ENCODE measurements at regions of chr16 and their contacts with region 1.

Region 1: DNA sequence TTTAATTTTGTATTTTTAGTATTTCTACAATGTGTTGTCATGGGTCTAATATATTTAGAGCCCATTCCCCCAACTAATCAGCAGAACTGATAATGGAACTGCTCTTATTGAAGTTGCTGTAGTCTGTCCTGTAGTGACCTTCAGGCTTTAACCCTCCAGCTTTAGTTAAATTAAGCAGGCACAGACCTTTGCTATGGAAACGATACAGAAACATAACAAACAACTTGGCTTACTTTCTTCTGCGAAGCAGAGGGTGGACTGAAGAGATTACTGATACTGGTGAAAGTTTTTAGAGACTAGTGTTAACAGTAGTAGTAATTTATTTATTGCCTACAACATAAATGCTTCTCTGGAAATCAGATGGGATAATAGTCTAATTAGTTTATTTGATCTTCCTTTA is 61.4 kb downstream of the NFATC3 start:
- DNase-seq: no peak
- H3K4me3 ChIP-seq: no peak overlapping the region
- H3K27ac ChIP-seq: 0 out of 2 replicates have a peak overlapping the region, but pooled peaks have one; percentile 37
- H3K4me1 ChIP-seq: peaks cover 31% of the 10 kb centered on the region
- H3K27me3 ChIP-seq: no peaks in the 10 kb centered on the region
- CTCF ChIP-seq: no peak

Region 2: DNA sequence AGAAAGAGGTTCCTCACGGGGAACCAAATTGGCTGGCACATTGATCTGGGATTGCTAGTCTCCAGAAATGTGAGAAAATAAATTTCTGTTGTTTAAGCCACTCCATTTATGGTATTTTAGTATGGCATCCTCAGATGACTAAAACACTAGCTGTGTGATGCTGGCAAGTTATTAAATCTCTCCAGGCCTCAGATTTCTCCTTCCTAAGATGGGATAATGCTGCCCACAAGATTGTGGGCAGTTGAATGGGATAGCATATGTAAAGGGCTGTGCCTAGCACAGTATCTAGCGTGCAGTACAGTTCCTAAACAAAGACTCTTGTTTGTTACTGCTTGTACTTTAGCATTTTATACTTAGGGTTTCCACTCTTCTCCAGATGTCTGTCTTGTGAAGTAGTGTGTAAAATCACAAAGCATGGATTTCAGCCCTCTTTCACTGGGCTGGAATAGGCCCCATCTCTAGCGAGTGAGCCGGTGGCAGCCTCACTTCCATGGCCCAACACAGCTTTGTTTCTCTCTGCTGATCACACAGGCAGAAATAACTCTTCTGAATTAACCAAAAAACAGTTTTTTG is 1075.0 kb before region 1 on chr16:
- CTCF ChIA-PET with region 1: no interaction called
- POLR2A ChIA-PET with region 1: interaction called, 13 read pairs
- intact Hi-C with region 1: no loop called
- DNase-seq: no peak
- H3K4me3 ChIP-seq: no peak overlapping the region
- H3K27ac ChIP-seq: no peak overlapping the region
- H3K4me1 ChIP-seq: 0 out of 2 replicates have a peak, but pooled peaks cover 4% of the 10 kb centered on the region
- H3K27me3 ChIP-seq: no peaks in the 10 kb centered on the region
- CTCF ChIP-seq: no peak

Region 3: DNA sequence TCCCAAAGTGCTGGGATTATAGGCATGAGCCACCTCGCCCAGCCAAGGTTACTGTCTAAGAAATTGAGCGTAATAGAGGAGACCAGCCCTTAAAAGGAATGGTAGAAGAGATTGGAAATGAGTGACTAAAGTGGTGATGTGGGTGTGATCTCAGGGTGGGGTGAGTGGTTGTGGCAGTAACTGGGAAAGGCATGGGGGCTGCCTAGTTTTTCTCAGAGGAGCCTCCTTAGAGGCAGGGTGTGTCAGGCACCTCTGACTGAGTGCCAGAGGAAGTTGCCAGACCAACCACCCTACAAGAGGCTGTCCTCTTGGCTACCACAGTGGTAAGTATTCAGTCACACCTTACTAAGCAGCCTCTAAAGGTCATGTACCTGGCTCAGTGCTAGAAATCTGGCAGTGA is 114.6 kb before region 1 on chr16:
- CTCF ChIA-PET with region 1: no interaction called
- POLR2A ChIA-PET with region 1: no interaction called
- intact Hi-C with region 1: no loop called
- DNase-seq: peak; percentile 76 to 80
- H3K4me3 ChIP-seq: no peak overlapping the region
- H3K27ac ChIP-seq: peak overlapping the region; percentile 59
- H3K4me1 ChIP-seq: peaks cover 15% of the 10 kb centered on the region
- H3K27me3 ChIP-seq: no peaks in the 10 kb centered on the region
- CTCF ChIP-seq: no peak

Region 4: DNA sequence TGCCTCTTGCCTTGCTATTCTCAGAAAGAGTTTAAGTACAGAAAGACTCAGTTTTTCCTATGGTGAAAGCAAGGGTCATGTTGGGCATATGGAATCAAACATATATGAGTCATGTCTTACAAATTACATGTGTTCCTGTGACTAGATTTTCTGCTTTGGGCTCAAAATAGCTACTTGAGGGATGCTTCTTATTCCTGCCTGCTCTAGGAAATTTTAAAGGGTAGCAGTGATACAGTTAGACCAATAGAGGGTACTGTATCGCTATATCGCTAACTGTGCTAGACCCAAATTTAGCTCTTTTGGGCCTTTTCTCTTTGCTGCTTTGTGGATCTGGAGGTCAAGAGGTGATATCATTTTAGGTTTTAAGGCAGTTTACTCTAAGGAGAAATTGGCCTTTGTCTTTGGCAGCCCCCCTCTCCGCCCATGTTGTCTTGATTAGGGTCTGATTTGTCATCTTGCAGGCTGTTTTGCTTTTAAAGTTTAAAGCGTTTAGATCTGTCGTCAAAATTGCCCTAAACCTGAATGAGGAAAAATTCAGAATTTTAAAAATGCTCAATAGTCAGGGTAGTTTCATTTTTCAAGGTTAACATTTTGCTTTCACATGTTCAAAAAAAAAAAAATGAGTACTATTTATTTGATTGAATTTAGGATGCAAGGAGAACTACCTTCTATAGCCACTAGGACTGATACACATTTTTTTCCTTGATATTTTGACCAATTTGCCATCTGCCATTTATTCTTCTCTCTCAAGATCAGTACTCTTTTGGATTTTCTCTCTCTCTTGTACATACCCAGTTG is 52.6 kb before region 1 on chr16:
- CTCF ChIA-PET with region 1: no interaction called
- POLR2A ChIA-PET with region 1: no interaction called
- intact Hi-C with region 1: loop called (anchors 10 kb)
- DNase-seq: no peak
- H3K4me3 ChIP-seq: no peak overlapping the region
- H3K27ac ChIP-seq: no peak overlapping the region
- H3K4me1 ChIP-seq: peaks cover 12% of the 10 kb centered on the region; the same call in 1 of the 2 replicates
- H3K27me3 ChIP-seq: no peaks in the 10 kb centered on the region
- CTCF ChIP-seq: peak; percentile 49

Region 5: GRCh38 chr16:68200088-68200783 is 53.7 kb after region 1 on chr16:
- CTCF ChIA-PET with region 1: no interaction called
- POLR2A ChIA-PET with region 1: no interaction called
- intact Hi-C with region 1: no loop called
- DNase-seq: peak in 1 of 2 experiments; percentile 68
- H3K4me3 ChIP-seq: no peak overlapping the region
- H3K27ac ChIP-seq: peak overlapping the region; percentile 47; the same call in 1 of the 2 replicates
- H3K4me1 ChIP-seq: peaks cover 17% of the 10 kb centered on the region
- H3K27me3 ChIP-seq: no peaks in the 10 kb centered on the region
- CTCF ChIP-seq: no peak

Measured in PC-9 (cell line).